Transverse colon (tissue), 4 donors: ENCODE measurements at regions of chr1 and their contacts with region 1.

Region 1: GRCh38 chr1:207084701-207085180 is 3.9 kb upstream of the C4BPB start:
- DNase-seq: peak; percentile 58
- H3K4me3 ChIP-seq: no peak overlapping the region
- H3K27ac ChIP-seq: no peak overlapping the region
- H3K4me1 ChIP-seq: peaks cover 0 to 14% (median 12%) of the 10 kb centered on the region in 4 donors
- H3K27me3 ChIP-seq: no peaks in the 10 kb centered on the region
- CTCF ChIP-seq: peak; percentile 56 to 84 (median 60)
- EP300 ChIP-seq: no peak
- POLR2A ChIP-seq: no peak

Region 2: DNA sequence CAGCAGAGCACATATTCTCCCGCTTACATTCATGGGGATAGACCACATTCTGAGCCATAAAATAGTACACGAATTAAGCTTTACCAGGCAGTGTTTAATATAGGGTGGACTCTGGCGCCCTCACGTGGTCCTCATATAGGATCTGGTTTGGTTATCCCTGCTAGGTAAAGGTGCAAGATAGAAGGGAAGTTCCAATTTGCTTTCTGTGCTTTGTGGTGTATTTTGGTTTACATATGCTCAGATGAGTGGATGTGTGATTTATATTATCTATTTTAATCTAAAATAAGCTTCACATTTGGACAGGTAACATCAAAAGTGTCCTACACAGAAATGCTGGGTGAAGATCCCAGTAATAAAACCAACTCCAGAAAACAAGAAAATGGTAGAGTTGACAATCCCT is 414.8 kb after region 1 on chr1:
- in situ Hi-C with region 1: loop called in 3 of 4 experiments (anchors 25 kb)
- intact Hi-C with region 1: no loop called
- DNase-seq: peak; percentile 74
- H3K4me3 ChIP-seq: no peak overlapping the region
- H3K27ac ChIP-seq: no peak overlapping the region
- H3K4me1 ChIP-seq: peaks cover 0 to 9% (median 7%) of the 10 kb centered on the region in 4 donors
- H3K27me3 ChIP-seq: peaks cover 89% of the 10 kb centered on the region
- CTCF ChIP-seq: peak; percentile 60 to 68 (median 63)
- EP300 ChIP-seq: no peak
- POLR2A ChIP-seq: no peak

Region 3: DNA sequence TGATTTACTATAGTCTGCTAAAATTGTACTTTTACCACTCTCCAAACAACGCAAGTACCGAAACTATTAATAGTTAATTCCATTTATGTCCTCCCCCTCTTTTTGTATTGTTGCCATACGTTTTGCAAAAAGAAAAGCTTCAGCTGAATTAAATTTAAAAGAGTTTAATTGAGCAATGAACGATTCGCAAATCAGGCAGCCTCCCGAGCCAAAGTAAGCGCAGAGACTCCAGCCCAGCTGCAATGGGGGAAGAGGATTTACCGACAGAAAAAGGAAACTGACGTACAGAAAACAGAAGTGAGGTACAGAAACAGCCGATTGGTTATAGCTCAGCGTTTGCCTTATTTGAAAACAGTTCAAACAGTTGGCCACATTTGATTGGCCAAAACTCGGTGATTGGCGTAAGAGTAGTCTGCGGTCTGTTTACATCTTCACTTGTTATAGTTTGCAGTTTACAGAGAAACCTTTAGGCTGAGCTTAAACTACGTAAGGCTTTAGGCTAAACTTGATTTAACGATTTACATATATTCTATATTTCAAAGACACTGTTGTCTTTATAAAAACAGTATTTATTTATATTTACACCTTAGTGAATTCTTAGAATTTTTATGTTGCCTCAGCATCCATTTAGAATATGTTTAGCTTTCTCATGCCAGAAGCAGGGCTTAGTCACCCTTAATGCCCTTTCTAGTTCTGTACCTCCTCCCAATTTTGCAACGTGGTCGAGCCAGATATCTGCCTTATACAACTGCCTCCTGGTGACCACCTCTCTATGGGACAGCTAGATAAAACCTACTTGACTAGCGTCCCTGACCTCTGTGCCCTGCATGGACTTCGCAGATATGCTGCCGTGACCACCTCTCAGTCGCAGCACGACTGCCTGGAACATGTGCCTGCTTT is 435.0 kb after region 1 on chr1:
- in situ Hi-C with region 1: loop called in 1 of 4 experiments (anchors 25 kb)
- intact Hi-C with region 1: no loop called
- DNase-seq: no peak
- H3K4me3 ChIP-seq: no peak overlapping the region
- H3K27ac ChIP-seq: no peak overlapping the region
- H3K4me1 ChIP-seq: no peaks in the 10 kb centered on the region
- H3K27me3 ChIP-seq: no peaks in the 10 kb centered on the region
- CTCF ChIP-seq: no peak
- EP300 ChIP-seq: no peak
- POLR2A ChIP-seq: no peak